ENCODE measurements at regions of chr2 and their contacts with region 1.

Region 1: DNA sequence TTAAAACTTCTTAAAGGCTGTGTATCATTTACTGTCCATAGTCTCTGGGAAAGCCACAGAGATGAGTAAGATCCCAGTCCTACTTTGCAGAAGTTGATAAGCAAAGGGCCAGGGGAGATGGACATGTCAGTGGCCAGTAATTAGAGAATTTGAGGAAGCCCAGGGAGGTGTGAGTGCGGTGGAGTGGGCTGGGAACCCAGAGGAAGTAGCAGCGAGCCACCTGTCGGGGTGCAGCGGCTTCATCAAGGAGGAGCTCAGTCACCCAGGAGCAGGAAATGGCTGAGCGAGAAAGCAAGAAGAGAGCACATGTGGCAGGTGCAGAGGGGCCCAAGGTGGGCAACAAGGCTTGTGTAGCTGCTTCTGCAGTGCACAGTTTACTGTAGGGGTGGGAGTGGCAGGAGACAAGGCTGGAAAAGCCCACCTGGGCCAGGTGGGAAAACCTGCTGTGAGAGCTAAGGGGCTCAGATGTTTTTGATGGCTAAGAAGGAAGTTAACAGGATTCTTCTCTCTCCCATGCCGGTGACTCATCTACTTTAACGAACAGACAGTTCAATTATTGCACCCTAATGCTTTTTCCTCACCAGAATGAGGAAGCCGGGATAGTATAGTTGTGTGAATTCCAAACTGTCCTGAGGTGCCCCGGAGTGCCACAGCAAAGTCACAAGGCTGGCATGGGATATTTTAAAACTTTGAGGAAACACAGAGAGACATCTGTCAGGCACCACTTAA is 34.8 kb upstream of the MGAT5 start:
- DNase-seq: peak in 8 of 9 donors; percentile 9 to 53 (median 40)
- ATAC-seq: peak; percentile 66
- H3K4me3 ChIP-seq: peak overlapping the region; percentile 27
- H3K4me3 Mint-ChIP-seq: peak overlapping the region; percentile 53 to 81 (median 72)
- H3K27ac ChIP-seq: peak overlapping the region; percentile 38
- H3K27ac Mint-ChIP-seq: peak overlapping the region; percentile 67 to 94 (median 89)
- H3K4me1 ChIP-seq: peaks cover 43 to 47% of the 10 kb centered on the region in 2 donors
- H3K4me1 Mint-ChIP-seq: peaks cover 45 to 72% (median 62%) of the 10 kb centered on the region in 7 donors
- H3K27me3 ChIP-seq: no peaks in the 10 kb centered on the region
- H3K27me3 Mint-ChIP-seq: no peaks in the 10 kb centered on the region

Region 2: DNA sequence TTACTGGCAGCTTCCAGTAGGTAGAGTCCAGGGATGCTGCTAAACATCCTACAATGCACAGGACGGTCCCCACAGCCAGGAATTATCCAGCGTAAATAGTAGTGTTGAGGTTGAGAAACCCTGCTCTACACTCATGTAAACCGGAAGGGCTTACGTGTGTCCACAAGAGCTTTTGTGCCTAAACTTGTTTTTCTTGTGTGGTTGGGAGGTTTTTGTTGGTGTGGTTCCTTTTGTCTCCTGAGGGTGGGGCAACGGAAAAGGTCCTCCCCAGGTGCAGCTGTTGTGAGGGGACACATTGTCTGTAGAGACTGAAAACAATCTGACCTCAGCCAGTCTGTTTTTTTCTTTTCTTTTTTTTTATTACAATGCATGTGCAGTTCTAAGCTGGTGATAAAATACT is 37.9 kb before region 1 on chr2:
- CTCF ChIA-PET with region 1: no interaction called
- POLR2A ChIA-PET with region 1: no interaction called
- intact Hi-C with region 1: loop called in 1 of 2 experiments (anchors 5 kb)
- DNase-seq: peak in 8 of 9 donors; percentile 30 to 79 (median 68)
- ATAC-seq: peak; percentile 87
- H3K4me3 ChIP-seq: no peak overlapping the region
- H3K4me3 Mint-ChIP-seq: peak overlapping the region; percentile 54 to 86 (median 67)
- H3K27ac ChIP-seq: peak overlapping the region; percentile 18
- H3K27ac Mint-ChIP-seq: peak overlapping the region; percentile 84 to 97 (median 91)
- H3K4me1 ChIP-seq: peaks cover 22 to 45% of the 10 kb centered on the region in 2 donors
- H3K4me1 Mint-ChIP-seq: peaks cover 52 to 95% (median 93%) of the 10 kb centered on the region in 7 donors
- H3K27me3 ChIP-seq: no peaks in the 10 kb centered on the region
- H3K27me3 Mint-ChIP-seq: no peaks in the 10 kb centered on the region

Region 3: DNA sequence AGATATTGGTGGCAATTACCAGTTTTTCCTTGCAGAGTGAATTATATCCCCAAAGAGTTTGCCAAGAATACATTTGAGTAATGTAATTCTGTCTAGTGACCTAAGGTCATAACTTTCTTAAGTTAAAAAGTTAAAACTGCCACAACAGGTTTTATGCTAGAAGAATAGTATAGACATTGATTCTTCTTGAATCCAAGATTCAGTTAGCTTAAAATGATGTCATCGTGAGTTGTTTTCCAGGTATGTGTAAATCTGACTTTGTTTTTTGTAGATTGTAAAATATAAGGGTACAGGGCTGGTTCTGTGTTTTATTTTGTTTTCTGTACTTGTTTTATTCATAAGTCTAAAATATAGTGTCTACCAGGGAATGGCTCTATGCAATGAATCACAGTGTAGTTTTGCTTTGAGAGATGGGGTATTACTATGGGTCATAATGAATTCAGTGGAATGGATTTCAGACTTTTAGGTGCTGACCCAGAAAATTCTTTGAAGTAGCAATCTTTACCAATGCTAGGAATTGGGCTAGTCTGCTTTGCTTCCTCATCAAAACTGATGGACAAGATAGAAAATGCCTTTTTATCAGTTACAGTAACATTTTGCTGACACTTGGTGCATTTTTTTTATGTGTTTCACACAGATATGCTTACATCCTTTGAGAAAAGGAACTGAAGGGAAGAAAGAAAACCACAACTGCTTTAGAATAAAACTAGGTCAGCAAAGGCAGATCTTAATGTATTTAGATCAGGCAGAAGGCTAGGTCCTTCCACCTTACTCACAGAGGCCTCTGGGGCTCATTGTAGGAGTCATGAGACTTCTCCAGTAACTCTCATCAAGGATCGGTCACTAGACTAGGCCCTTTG is 14.0 kb after region 1 on chr2:
- CTCF ChIA-PET with region 1: interaction called, 3 read pairs
- POLR2A ChIA-PET with region 1: interaction called, 6 read pairs
- intact Hi-C with region 1: loop called in 1 of 2 experiments (anchors 1 kb)
- DNase-seq: peak in 7 of 9 donors; percentile 13 to 68 (median 57)
- ATAC-seq: peak; percentile 84
- H3K4me3 ChIP-seq: peak overlapping the region; percentile 17
- H3K4me3 Mint-ChIP-seq: peak overlapping the region; percentile 29 to 81 (median 64)
- H3K27ac ChIP-seq: peak overlapping the region; percentile 37
- H3K27ac Mint-ChIP-seq: peak overlapping the region; percentile 62 to 87 (median 76)
- H3K4me1 ChIP-seq: peaks cover 56 to 59% of the 10 kb centered on the region in 2 donors
- H3K4me1 Mint-ChIP-seq: peaks cover 57 to 80% (median 75%) of the 10 kb centered on the region in 7 donors
- H3K27me3 ChIP-seq: no peaks in the 10 kb centered on the region
- H3K27me3 Mint-ChIP-seq: no peaks in the 10 kb centered on the region

Measured in naive thymus-derived CD4-positive, alpha-beta T cell (primary cell).